Calu3 (cell line): ENCODE measurements at regions of chr1 and their contacts with region 1.

Region 1: GRCh38 chr1:175481126-175482066 is 262.0 kb downstream of the TNR start:
- DNase-seq: peak; percentile 17
- H3K4me3 Mint-ChIP-seq: no peak overlapping the region
- H3K27ac Mint-ChIP-seq: no peak overlapping the region
- H3K4me1 Mint-ChIP-seq: no peaks in the 10 kb centered on the region
- H3K27me3 Mint-ChIP-seq: peaks cover 74% of the 10 kb centered on the region
- CTCF ChIP-seq: no peak

Region 2: GRCh38 chr1:175757381-175758015 is 276.1 kb after region 1 on chr1:
- CTCF ChIA-PET with region 1: no interaction called
- intact Hi-C with region 1: loop called (anchors 5 kb)
- DNase-seq: peak; percentile 70
- H3K4me3 Mint-ChIP-seq: no peak overlapping the region
- H3K27ac Mint-ChIP-seq: no peak overlapping the region
- H3K4me1 Mint-ChIP-seq: no peaks in the 10 kb centered on the region
- H3K27me3 Mint-ChIP-seq: peaks cover 57% of the 10 kb centered on the region
- CTCF ChIP-seq: peak; percentile 86

Region 3: DNA sequence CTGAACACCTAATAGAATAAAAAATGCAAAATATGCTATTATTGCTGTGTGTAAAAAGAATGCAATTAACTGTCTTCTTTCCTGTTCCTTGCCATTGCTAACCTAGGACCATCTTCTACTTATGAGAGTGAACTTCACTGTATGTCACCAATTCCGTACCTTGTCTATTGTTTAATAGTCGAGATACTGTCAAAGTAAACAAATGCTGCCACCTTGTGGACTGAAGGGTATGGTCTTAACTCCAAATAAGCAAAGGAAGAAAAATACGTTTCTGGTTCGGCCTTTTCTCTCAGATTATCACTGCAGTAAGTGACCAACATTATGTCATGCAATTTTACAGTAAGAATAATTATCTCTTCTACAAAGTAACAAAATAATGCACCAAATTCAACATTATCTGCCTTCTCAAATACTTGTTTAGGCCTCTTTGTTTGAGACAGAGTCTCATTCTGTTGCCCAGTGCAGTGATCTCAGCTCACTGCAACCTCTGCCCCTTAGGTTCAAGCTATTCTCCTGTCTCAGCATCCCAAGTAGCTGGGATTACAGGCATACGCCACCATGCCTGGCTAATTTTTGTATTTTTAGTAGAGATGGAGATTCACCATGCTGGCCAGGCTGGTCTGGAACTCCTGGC is 592.2 kb after region 1 on chr1:
- CTCF ChIA-PET with region 1: no interaction called
- intact Hi-C with region 1: loop called (anchors 1 kb)
- DNase-seq: peak; percentile 53
- H3K4me3 Mint-ChIP-seq: no peak overlapping the region
- H3K27ac Mint-ChIP-seq: no peak overlapping the region
- H3K4me1 Mint-ChIP-seq: no peaks in the 10 kb centered on the region
- H3K27me3 Mint-ChIP-seq: no peaks in the 10 kb centered on the region
- CTCF ChIP-seq: peak; percentile 63